ENCODE measurements at regions of chr20 and their contacts with region 1.

Region 1: GRCh38 chr20:14189794-14190402 is 147.5 kb downstream of the FLRT3 start:
- DNase-seq: peak; percentile 62
- ATAC-seq: peak; percentile 64
- H3K4me3 ChIP-seq: no peak overlapping the region
- H3K27ac ChIP-seq: no peak overlapping the region
- H3K4me1 ChIP-seq: no peaks in the 10 kb centered on the region
- H3K27me3 ChIP-seq: no peaks in the 10 kb centered on the region
- CTCF ChIP-seq: peak; percentile 60
- POLR2A ChIP-seq: no peak
- RAD21 ChIP-seq: peak; percentile 75

Region 2: DNA sequence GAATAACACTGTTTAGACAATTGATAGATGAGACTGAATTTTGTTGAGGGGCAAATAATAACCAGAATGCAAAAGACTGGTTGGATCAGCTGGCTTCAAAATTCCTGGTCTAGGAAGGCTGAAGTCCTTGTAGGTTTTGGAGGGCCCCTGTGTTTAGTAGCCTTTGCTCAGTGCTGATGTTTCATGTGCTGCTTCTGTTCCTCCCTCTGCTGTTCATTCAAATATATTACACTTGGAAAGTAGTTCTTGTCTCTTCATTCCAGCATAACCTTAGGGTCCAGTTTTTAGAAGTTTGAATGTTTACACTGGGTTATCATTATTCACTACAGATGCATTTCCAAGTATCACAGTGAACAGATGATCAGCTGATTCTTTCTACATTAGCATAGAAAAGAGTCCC is 75.0 kb after region 1 on chr20:
- CTCF ChIA-PET with region 1: no interaction called
- POLR2A ChIA-PET with region 1: no interaction called
- dilution Hi-C with region 1: no loop called
- in situ Hi-C with region 1: no loop called
- intact Hi-C with region 1: loop called (anchors 10 kb)
- DNase-seq: peak; percentile 37
- ATAC-seq: peak; percentile 44; the same call in 1 of the 2 replicates
- H3K4me3 ChIP-seq: no peak overlapping the region
- H3K27ac ChIP-seq: no peak overlapping the region
- H3K4me1 ChIP-seq: no peaks in the 10 kb centered on the region
- H3K27me3 ChIP-seq: no peaks in the 10 kb centered on the region
- CTCF ChIP-seq: peak; percentile 41
- POLR2A ChIP-seq: no peak
- RAD21 ChIP-seq: peak; percentile 47

Region 3: DNA sequence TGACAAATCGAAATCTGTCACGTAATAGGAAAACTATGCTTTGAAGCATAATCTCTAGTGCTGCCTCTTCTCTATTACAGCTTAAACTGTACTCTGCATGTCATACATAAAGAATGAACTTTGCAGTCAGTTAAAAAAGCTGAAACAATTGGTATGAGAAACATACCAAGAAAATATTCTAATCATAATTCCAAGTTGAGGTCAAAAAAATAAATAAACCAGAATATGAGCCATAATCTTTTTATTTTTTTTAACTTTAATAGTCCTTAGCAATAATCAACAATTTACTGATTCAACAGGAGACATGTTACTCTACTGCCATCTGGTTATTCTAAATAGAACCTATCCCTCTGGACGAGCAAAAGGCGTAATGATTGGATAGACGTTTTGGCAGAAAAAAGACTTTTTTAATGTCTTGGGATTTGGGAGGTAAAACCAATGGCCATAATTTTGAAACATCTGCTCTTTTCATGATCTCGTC is 371.9 kb after region 1 on chr20:
- CTCF ChIA-PET with region 1: no interaction called
- POLR2A ChIA-PET with region 1: no interaction called
- dilution Hi-C with region 1: no loop called
- in situ Hi-C with region 1: no loop called
- intact Hi-C with region 1: loop called (anchors 5 kb)
- DNase-seq: peak; percentile 78
- ATAC-seq: peak; percentile 92
- H3K4me3 ChIP-seq: no peak overlapping the region
- H3K27ac ChIP-seq: no peak overlapping the region
- H3K4me1 ChIP-seq: no peaks in the 10 kb centered on the region
- H3K27me3 ChIP-seq: no peaks in the 10 kb centered on the region
- CTCF ChIP-seq: peak; percentile 48
- POLR2A ChIP-seq: no peak
- RAD21 ChIP-seq: peak; percentile 53